ENCODE measurements at regions of chr22 and their contacts with region 1.

Region 1: GRCh38 chr22:24867323-24868022 is 61.5 kb downstream of the SGSM1 start:
- DNase-seq: no peak
- ATAC-seq: no peak

Region 2: DNA sequence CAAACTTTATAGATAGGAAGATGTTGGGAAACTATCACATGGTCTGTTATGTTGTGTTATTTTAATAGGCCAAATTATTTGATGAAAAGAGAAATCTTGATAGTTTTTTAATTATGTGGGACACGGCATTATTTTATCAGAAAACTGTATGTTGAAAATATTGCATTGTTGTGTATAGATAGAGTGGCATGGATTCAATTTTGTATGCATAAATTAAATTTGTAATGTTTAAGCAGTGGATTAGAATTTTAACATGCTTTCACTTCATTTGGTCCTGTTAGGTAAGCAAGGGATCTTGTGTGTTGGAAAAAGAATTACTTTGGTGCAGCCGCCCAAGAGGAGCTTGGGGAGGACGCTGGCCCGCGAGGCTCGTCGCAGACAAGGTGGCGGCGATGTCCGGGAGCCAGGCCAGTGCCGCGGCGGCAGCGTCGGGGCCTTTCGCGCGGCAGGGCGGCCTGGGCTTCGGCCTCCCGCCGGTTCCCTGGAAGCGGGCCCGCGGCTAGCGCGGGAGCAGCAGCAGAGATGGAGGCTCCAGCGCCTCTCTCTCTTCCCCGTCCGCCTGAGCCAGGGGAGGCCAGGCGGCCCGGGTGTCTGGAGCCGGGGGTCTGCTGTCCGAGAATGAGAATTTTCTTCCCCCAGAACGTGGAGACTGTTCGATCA is 181.8 kb before region 1 on chr22:
- intact Hi-C with region 1: no loop called
- DNase-seq: no peak
- ATAC-seq: peak; percentile 60

Region 3: GRCh38 chr22:24768537-24769374 is 98.7 kb before region 1 on chr22:
- intact Hi-C with region 1: no loop called
- DNase-seq: no peak
- ATAC-seq: peak; percentile 80

Region 4: GRCh38 chr22:24905909-24906308 is 38.4 kb after region 1 on chr22:
- intact Hi-C with region 1: loop called (anchors 2 kb)
- DNase-seq: no peak
- ATAC-seq: no peak

Measured in sciatic nerve (tissue), 2 donors.